H1 (cell line): ENCODE measurements at regions of chr3 and their contacts with region 1.

Region 1: GRCh38 chr3:33426068-33426467 is 14.1 kb downstream of the UBP1 start:
- DNase-seq: no peak
- H3K4me3 ChIP-seq: peak overlapping the region in 1 of 4 experiments; percentile 30; a peak in 1 of 8 replicates
- H3K27ac ChIP-seq: no peak overlapping the region
- H3K4me1 ChIP-seq: peaks cover 11 to 36% (median 24%) of the 10 kb centered on the region in 4 experiments
- H3K27me3 ChIP-seq: no peaks in the 10 kb centered on the region
- CTCF ChIP-seq: no peak
- EP300 ChIP-seq: peak in 1 of 2 experiments; percentile 59; a peak in 1 of 3 replicates
- POLR2A ChIP-seq: no peak
- RAD21 ChIP-seq: no peak

Region 2: GRCh38 chr3:33440323-33441232 is 14.5 kb after region 1 on chr3 and contains the start of gene UBP1:
- CTCF ChIA-PET with region 1: interaction called, 3 read pairs
- POLR2A ChIA-PET with region 1: interaction called, 82 read pairs
- DNase-seq: peak; percentile 95 to 97
- H3K4me3 ChIP-seq: peak within 1 kb of the TSS; percentile 82 to 94 (median 88)
- H3K27ac ChIP-seq: peak within 1 kb of the TSS; percentile 84
- H3K4me1 ChIP-seq: peaks cover 0 to 4% (median 2%) of the 10 kb centered on the region in 4 experiments; a peak in 4 of 7 replicates
- H3K27me3 ChIP-seq: no peaks in the 10 kb centered on the region; a peak in 1 of 7 replicates
- CTCF ChIP-seq: peak in 1 of 3 experiments; percentile 9; a peak in 1 of 4 replicates
- EP300 ChIP-seq: peak in 1 of 2 experiments; percentile 1; a peak in 1 of 3 replicates
- POLR2A ChIP-seq: peak; percentile 76 to 83
- RAD21 ChIP-seq: no peak
- total RNA-seq, gene UBP1: 64.5 and 71.9 TPM in 2 replicates

Region 3: GRCh38 chr3:33602829-33603228 is 176.8 kb after region 1 on chr3:
- CTCF ChIA-PET with region 1: no interaction called
- POLR2A ChIA-PET with region 1: no interaction called
- DNase-seq: no peak
- H3K4me3 ChIP-seq: no peak overlapping the region
- H3K27ac ChIP-seq: no peak overlapping the region
- H3K4me1 ChIP-seq: no peaks in the 10 kb centered on the region
- H3K27me3 ChIP-seq: no peaks in the 10 kb centered on the region
- CTCF ChIP-seq: no peak
- EP300 ChIP-seq: no peak
- POLR2A ChIP-seq: no peak
- RAD21 ChIP-seq: no peak